ENCODE measurements at regions of chr15 and their contacts with region 1.

Region 1: GRCh38 chr15:30859091-30859874 is 44.4 kb upstream of the FAN1 start:
- DNase-seq: no peak
- H3K4me3 ChIP-seq: no peak overlapping the region
- H3K27ac ChIP-seq: no peak overlapping the region
- H3K4me1 ChIP-seq: no peaks in the 10 kb centered on the region
- H3K27me3 ChIP-seq: no peaks in the 10 kb centered on the region
- CTCF ChIP-seq: peak; percentile 65 to 67

Region 2: GRCh38 chr15:30791239-30792175 is 67.8 kb before region 1 on chr15:
- CTCF ChIA-PET with region 1: no interaction called
- dilution Hi-C with region 1: no loop called
- in situ Hi-C with region 1: no loop called
- intact Hi-C with region 1: loop called (anchors 5 kb)
- DNase-seq: no peak
- H3K4me3 ChIP-seq: no peak overlapping the region
- H3K27ac ChIP-seq: no peak overlapping the region
- H3K4me1 ChIP-seq: no peaks in the 10 kb centered on the region
- H3K27me3 ChIP-seq: no peaks in the 10 kb centered on the region
- CTCF ChIP-seq: no peak

Region 3: DNA sequence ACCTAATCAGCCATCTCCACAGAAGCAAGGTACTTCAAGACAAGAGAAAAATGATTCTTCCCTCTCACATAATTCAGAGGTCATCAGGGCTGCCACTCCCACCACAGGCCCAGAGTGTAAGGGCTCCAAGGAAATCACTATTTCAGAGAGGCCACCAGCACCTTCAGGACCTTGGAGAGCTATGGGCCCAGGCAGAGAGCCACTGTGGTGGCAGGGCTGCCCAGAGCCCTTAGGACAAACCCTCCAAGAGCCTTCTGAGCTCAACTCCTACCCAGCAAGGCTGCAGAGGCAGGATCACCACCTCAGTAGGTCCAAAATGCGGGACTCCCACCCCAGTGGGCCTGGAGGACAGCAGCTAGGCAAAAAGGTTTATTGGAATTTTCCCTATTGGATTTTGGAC is 26.5 kb after region 1 on chr15:
- CTCF ChIA-PET with region 1: no interaction called
- dilution Hi-C with region 1: loop called (anchors 5 kb)
- in situ Hi-C with region 1: no loop called
- intact Hi-C with region 1: no loop called
- DNase-seq: no peak
- H3K4me3 ChIP-seq: no peak overlapping the region
- H3K27ac ChIP-seq: no peak overlapping the region
- H3K4me1 ChIP-seq: no peaks in the 10 kb centered on the region
- H3K27me3 ChIP-seq: no peaks in the 10 kb centered on the region
- CTCF ChIP-seq: no peak

Region 4: DNA sequence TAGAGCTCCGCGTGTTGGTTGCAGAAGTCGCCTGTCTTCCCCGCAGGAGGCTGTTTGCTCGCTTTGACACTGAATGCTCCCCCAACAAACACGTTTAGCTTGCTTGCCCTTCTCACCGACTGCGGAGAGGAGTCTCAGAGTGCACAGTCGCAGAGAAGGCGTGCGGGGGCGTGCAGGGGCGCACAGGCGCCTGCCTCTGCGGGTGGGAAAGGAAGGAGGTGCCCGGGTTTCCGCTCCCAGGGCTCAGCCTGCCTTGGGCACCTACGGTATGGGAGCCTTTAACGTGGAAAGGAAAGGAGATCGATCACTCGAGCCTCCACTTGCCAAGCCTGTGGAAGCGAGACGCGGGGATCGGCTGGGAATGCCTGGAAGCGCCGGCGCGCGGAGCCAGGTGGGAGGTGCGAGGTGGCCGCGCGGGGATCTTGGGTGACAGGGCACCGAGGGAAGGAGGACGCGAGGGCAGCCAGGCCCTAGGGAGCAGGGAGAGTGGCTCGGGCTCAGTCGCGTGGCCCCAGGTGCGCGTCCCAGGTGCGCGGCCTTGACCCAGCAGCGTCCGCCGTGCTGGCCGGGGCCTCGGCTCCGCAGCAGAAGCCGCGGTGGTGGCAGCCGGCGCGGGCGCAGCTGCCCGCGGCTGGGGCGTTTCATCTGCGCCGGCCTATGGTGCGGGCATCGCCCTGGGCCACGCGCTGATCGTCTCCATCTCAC is 44.4 kb after region 1 on chr15 and contains the start of gene FAN1:
- CTCF ChIA-PET with region 1: no interaction called
- dilution Hi-C with region 1: no loop called
- in situ Hi-C with region 1: no loop called
- intact Hi-C with region 1: no loop called
- DNase-seq: peak; percentile 85
- H3K4me3 ChIP-seq: peak within 1 kb of the TSS; percentile 90 to 94 (median 92)
- H3K27ac ChIP-seq: peak within 1 kb of the TSS; percentile 34
- H3K4me1 ChIP-seq: peaks cover 7% of the 10 kb centered on the region
- H3K27me3 ChIP-seq: no peaks in the 10 kb centered on the region
- CTCF ChIP-seq: no peak
- total RNA-seq, gene FAN1: 21.5 to 23.8 TPM

Region 5: GRCh38 chr15:30919877-30920550 is 60.7 kb after region 1 on chr15:
- CTCF ChIA-PET with region 1: no interaction called
- dilution Hi-C with region 1: no loop called
- in situ Hi-C with region 1: no loop called
- intact Hi-C with region 1: no loop called
- DNase-seq: no peak
- H3K4me3 ChIP-seq: no peak overlapping the region
- H3K27ac ChIP-seq: no peak overlapping the region
- H3K4me1 ChIP-seq: peaks cover 17% of the 10 kb centered on the region
- H3K27me3 ChIP-seq: no peaks in the 10 kb centered on the region
- CTCF ChIP-seq: no peak